ENCODE measurements at regions of chr7 and their contacts with region 1.

Region 1: DNA sequence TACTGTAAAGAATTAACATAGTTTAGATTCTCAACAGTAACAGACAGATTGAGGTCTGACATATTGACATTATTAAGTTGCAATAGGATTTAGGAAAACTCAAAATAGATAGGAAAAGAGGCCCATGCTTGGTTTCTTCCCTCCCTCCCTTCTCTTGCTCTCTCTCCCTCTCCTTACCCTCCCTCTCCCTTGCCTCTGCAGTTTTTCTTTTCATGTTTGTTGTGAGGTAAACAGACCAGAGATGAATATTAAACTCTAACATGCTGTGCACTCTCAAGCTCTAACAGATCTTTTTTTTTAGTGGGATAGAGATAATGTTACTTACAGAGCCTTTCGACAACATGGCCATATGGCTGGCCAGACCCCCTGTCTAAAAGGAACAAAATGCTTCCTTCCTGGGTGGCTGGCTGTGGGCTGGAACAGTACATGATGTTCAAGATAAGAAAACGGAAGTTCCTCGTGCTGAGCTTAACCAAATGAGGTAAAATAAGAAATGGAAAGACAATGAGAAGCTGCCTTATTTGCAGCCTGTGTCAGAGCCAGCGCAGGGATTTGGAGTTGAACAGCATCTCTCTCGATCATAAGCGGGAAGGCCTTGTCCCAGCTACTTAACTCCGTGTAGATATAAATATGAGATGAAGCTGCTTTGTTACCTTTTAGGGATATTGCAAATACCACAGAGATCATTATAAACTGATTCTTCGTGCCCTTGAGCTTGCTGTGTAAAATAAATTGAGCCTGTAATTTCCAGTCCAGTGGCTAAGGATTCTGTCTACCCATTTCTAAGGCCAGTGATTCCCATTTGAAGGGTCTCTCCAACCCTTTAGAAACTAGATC is 391.9 kb upstream of the NPVF start:
- DNase-seq: no peak
- H3K4me3 ChIP-seq: no peak overlapping the region
- H3K27ac ChIP-seq: no peak overlapping the region
- H3K4me1 ChIP-seq: no peaks in the 10 kb centered on the region
- H3K27me3 ChIP-seq: no peaks in the 10 kb centered on the region
- CTCF ChIP-seq: no peak

Region 2: GRCh38 chr7:25552998-25553397 is 67.2 kb before region 1 on chr7:
- dilution Hi-C with region 1: loop called (anchors 5 kb)
- DNase-seq: no peak
- H3K4me3 ChIP-seq: no peak overlapping the region
- H3K27ac ChIP-seq: no peak overlapping the region
- H3K4me1 ChIP-seq: no peaks in the 10 kb centered on the region
- H3K27me3 ChIP-seq: no peaks in the 10 kb centered on the region
- CTCF ChIP-seq: no peak

Region 3: DNA sequence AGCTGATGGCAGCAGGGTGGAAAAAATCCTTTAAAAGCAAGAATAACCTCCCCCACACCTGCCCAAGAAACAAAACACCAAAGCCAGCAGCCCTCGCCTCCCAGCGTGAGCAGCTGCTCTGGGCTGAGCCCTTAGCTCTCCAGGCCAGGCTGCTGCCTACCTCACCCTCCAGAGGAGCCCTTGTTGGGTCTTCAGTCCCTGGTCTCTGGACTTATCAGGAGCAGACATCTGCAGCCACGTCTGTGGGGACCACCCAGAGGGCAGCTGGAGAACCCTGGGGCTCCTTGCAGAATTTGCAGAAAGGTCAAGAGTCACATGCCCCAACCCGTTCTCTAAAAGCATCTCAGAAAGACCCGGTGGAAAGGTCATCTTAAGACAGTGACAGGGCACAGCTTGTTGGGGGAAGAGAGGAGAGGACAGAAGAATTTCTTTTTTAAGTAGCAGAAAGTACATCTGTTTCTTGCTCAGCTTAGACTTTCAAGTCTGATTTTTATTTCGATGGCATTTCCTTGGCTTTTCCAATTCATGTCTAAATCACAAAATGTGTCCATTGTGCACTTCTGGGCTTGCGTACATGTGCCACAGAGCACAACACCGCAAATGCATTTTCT is 106.1 kb after region 1 on chr7:
- dilution Hi-C with region 1: no loop called
- DNase-seq: no peak
- H3K4me3 ChIP-seq: no peak overlapping the region
- H3K27ac ChIP-seq: no peak overlapping the region
- H3K4me1 ChIP-seq: peaks cover 7% of the 10 kb centered on the region
- H3K27me3 ChIP-seq: no peaks in the 10 kb centered on the region
- CTCF ChIP-seq: no peak

Region 4: GRCh38 chr7:25795824-25796235 is 175.6 kb after region 1 on chr7:
- dilution Hi-C with region 1: no loop called
- DNase-seq: no peak
- H3K4me3 ChIP-seq: no peak overlapping the region
- H3K27ac ChIP-seq: no peak overlapping the region
- H3K4me1 ChIP-seq: no peaks in the 10 kb centered on the region
- H3K27me3 ChIP-seq: no peaks in the 10 kb centered on the region
- CTCF ChIP-seq: no peak